ENCODE measurements at regions of chr5 and their contacts with region 1.

Region 1: GRCh38 chr5:139392678-139393496 is 2.0 kb downstream of the PROB1 start:
- DNase-seq: peak; percentile 81
- H3K4me3 Mint-ChIP-seq: peak overlapping the region; percentile 87
- H3K27ac Mint-ChIP-seq: peak overlapping the region; percentile 93
- H3K4me1 Mint-ChIP-seq: peaks cover 62% of the 10 kb centered on the region
- H3K27me3 Mint-ChIP-seq: no peaks in the 10 kb centered on the region

Region 2: DNA sequence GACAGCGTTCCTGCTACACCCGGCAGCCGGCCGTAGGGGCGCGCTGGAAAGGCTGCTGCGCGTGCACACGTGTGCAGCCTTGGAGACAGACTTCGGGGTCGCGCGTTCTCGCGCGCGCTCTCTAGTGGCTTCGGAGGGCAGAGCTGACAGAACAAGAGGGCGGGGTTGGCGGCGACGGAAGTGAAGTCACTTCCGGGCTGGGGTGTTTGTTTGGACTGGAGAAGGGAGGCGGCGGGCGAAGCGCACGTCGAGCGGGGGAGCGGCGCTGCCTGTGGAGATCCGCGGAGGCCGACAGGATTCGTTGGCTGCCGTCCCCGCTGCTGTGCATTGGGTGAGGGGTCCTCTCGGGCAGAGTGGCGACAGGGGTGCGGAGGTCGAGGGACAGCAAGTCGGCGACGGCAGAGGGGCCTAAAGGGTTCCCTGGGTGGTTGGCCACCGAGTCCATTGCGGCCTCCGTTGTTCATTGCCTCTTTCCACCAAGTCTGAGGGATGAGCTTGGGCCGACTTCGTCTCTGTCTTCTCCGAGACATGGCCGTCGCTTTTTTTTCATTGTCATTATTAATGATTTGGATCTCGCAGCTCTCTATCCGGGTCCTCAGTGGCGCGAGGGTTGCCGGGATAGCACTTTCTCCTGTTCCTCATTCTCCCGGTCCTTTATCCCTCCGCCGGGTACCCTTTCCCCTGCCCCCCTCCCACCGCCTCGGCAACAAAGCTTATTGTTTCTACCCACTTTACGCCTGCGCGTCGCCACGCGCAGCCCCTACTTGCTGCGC is 51.1 kb before region 1 on chr5 and contains the start of gene PAIP2:
- CTCF ChIA-PET with region 1: interaction called, 12 read pairs
- POLR2A ChIA-PET with region 1: interaction called, 5 read pairs
- DNase-seq: peak; percentile 98
- H3K4me3 Mint-ChIP-seq: peak within 1 kb of the TSS; percentile 93
- H3K27ac Mint-ChIP-seq: peak within 1 kb of the TSS; percentile 99
- H3K4me1 Mint-ChIP-seq: peaks cover 38% of the 10 kb centered on the region
- H3K27me3 Mint-ChIP-seq: no peaks in the 10 kb centered on the region
- total RNA-seq, gene PAIP2: 87.0 to 96.0 TPM

Region 3: GRCh38 chr5:139382381-139383180 is 10.3 kb before region 1 on chr5:
- CTCF ChIA-PET with region 1: interaction called, 13 read pairs
- POLR2A ChIA-PET with region 1: no interaction called
- DNase-seq: no peak
- H3K4me3 Mint-ChIP-seq: no peak overlapping the region
- H3K27ac Mint-ChIP-seq: peak overlapping the region; percentile 71
- H3K4me1 Mint-ChIP-seq: peaks cover 45% of the 10 kb centered on the region
- H3K27me3 Mint-ChIP-seq: no peaks in the 10 kb centered on the region

Region 4: DNA sequence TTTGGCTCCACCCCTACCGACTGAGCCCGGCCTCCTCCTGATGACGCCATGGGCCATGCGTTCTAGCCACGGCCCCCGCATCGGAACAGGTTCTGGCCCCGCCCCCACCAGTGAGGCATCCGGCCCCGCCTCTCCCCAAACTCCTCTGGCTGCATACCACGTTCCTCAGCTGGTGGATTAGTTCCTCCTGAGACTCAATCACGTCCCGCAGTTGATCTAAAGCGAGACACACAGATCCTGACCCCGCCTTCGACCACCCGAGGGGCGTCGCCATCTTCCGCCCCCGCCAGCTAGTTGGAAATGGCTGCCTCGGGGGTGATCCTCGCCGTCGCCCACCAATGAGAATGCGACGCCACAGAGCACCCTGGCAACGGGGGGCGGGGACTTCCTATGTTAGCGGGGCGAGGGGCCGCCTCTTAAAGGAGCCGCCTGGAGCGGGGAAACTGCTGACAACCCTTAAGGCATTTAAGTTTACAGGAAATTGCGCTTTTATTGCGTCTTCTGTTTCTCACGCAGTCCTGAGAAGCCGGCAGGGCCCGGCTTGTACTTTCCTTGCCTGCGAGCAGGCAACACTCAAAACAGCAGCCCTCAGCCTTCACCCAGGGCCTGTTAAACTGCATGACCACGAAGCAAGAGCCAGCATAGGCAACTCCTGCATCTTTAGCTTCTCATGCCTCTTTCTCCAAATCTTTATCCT is 11.0 kb after region 1 on chr5 and contains the start of gene SPATA24:
- CTCF ChIA-PET with region 1: interaction called, 43 read pairs
- POLR2A ChIA-PET with region 1: no interaction called
- DNase-seq: peak; percentile 99
- H3K4me3 Mint-ChIP-seq: peak within 1 kb of the TSS; percentile 92
- H3K27ac Mint-ChIP-seq: peak within 1 kb of the TSS; percentile 100
- H3K4me1 Mint-ChIP-seq: peaks cover 47% of the 10 kb centered on the region
- H3K27me3 Mint-ChIP-seq: no peaks in the 10 kb centered on the region
- total RNA-seq, gene SPATA24: 5.5 to 7.2 TPM

Region 5: DNA sequence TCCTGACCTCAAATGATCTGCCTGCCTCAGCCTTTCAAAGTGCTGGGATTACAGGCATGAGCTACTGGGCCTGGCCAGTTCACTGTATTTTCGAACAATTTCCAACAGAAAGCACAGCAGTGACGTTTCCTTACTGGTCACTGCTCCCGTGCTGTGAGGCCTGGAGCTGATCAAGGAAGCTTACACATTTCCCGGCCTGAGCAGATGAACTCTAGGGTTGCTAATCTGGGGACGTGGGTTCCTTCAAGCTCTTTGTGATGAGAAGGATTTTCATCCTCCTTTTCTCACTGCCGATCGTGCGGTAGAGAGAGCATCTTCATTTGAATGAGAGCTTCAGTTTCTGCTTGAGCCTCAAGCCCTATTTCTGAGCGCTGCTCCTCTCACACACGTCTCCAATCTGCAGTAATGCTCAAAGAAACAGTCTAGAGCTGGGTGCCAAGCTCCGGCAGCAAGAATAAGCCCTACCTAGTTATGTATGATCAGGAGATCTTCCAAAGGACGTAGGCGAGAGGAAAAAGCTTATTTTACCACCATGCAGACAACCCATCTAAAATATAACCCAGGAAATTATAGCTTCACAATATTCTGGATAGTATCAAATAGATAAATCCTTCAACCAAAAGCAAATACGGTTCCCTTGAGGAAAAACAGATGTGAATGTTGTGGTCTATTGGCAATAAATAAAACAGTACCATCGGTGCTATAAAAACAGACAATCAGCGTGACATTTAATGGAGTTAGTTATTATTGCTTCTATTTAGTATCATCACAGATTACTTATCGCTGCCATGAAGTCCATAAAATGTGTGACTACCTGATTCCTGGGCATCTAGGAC is 18.3 kb after region 1 on chr5:
- CTCF ChIA-PET with region 1: interaction called, 31 read pairs
- POLR2A ChIA-PET with region 1: no interaction called
- DNase-seq: no peak
- H3K4me3 Mint-ChIP-seq: no peak overlapping the region
- H3K27ac Mint-ChIP-seq: no peak overlapping the region
- H3K4me1 Mint-ChIP-seq: peaks cover 50% of the 10 kb centered on the region
- H3K27me3 Mint-ChIP-seq: no peaks in the 10 kb centered on the region

Measured in activated CD4-positive, alpha-beta T cell treated with anti-CD3 and anti-CD28 coated beads, Interleukin-2, amount 10 ng/mL, durations not matched to agents 7 days and 5 days (primary cell).